CD4-positive, alpha-beta memory T cell (primary cell): ENCODE measurements at regions of chr5 and their contacts with region 1.

Region 1: DNA sequence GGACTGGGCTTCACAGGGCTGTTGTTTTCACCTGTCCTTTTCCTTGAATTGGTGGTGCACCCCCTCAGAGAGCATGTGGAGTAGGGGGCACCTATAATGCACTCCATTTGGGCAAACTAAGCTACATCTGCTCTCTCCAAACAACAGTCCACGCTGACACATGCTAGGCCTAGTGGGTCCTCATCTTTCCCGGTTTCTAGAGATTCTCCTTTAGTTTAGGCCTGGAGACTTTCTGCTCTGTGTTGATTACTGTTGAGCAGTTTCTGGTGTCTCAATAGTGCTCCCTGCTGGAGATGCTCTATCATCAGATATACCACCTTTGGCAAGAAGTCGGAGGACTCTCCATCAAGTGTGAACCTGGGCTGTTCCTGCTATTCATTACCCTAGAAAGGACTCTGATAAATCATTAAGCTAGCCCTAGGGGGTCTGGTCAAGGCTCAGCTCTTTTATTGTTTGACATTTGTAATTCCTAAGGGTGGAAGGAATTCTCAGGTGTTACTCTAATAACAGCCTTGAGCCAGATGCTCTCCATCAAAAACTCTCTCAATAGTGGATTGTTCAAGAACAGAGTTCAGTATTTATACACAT is 64.0 kb upstream of the FYB1 start:
- DNase-seq: peak; percentile 77 to 81 (median 79)
- H3K4me3 ChIP-seq: no peak overlapping the region
- H3K4me3 Mint-ChIP-seq: peak overlapping the region in 5 of 8 donors; percentile 7 to 70 (median 10)
- H3K27ac ChIP-seq: no peak overlapping the region
- H3K27ac Mint-ChIP-seq: peak overlapping the region; percentile 16 to 96 (median 58)
- H3K4me1 ChIP-seq: peaks cover 13% of the 10 kb centered on the region
- H3K4me1 Mint-ChIP-seq: peaks cover 11 to 43% (median 28%) of the 10 kb centered on the region in 4 donors
- H3K27me3 ChIP-seq: no peaks in the 10 kb centered on the region
- H3K27me3 Mint-ChIP-seq: peaks cover 5 to 7% of the 10 kb centered on the region in 2 donors

Region 2: GRCh38 chr5:39074016-39074886 is 209.1 kb before region 1 on chr5 and contains the start of gene RICTOR:
- CTCF ChIA-PET with region 1: interaction called, 4 read pairs
- POLR2A ChIA-PET with region 1: no interaction called
- intact Hi-C with region 1: loop called (anchors 5 kb)
- DNase-seq: peak; percentile 87 to 90 (median 89)
- H3K4me3 ChIP-seq: peak within 1 kb of the TSS; percentile 50 to 56
- H3K4me3 Mint-ChIP-seq: peak within 1 kb of the TSS; percentile 97 to 99 (median 98)
- H3K27ac ChIP-seq: peak within 1 kb of the TSS; percentile 97
- H3K27ac Mint-ChIP-seq: peak within 1 kb of the TSS; percentile 96 to 99 (median 98)
- H3K4me1 ChIP-seq: peaks cover 46% of the 10 kb centered on the region
- H3K4me1 Mint-ChIP-seq: peaks cover 25 to 59% (median 39%) of the 10 kb centered on the region in 4 donors
- H3K27me3 ChIP-seq: peaks cover 22% of the 10 kb centered on the region
- H3K27me3 Mint-ChIP-seq: peaks cover 14 to 18% of the 10 kb centered on the region in 2 donors
- total RNA-seq, gene RICTOR: 85.0 to 94.9 TPM

Region 3: GRCh38 chr5:39158127-39158593 is 125.2 kb before region 1 on chr5:
- CTCF ChIA-PET with region 1: interaction called, 32 read pairs
- POLR2A ChIA-PET with region 1: interaction called, 3 read pairs
- intact Hi-C with region 1: no loop called
- DNase-seq: peak in 1 of 5 donors; percentile 58
- H3K4me3 ChIP-seq: peak overlapping the region in 1 of 2 donors; percentile 7
- H3K4me3 Mint-ChIP-seq: peak overlapping the region in 7 of 8 donors; percentile 55 to 83 (median 71)
- H3K27ac ChIP-seq: peak overlapping the region; percentile 30
- H3K27ac Mint-ChIP-seq: peak overlapping the region; percentile 78 to 94 (median 89)
- H3K4me1 ChIP-seq: peaks cover 100% of the 10 kb centered on the region
- H3K4me1 Mint-ChIP-seq: peaks cover 63 to 88% (median 74%) of the 10 kb centered on the region in 4 donors
- H3K27me3 ChIP-seq: no peaks in the 10 kb centered on the region
- H3K27me3 Mint-ChIP-seq: no peaks in the 10 kb centered on the region

Region 4: GRCh38 chr5:39177631-39177964 is 105.7 kb before region 1 on chr5:
- CTCF ChIA-PET with region 1: interaction called, 25 read pairs
- POLR2A ChIA-PET with region 1: interaction called, 8 read pairs
- intact Hi-C with region 1: loop called (anchors 1 kb)
- DNase-seq: peak; percentile 67 to 78 (median 71)
- H3K4me3 ChIP-seq: peak overlapping the region; percentile 18 to 25
- H3K4me3 Mint-ChIP-seq: peak overlapping the region; percentile 66 to 81 (median 75)
- H3K27ac ChIP-seq: peak overlapping the region; percentile 56
- H3K27ac Mint-ChIP-seq: peak overlapping the region; percentile 91 to 97 (median 92)
- H3K4me1 ChIP-seq: peaks cover 100% of the 10 kb centered on the region
- H3K4me1 Mint-ChIP-seq: peaks cover 87 to 98% (median 93%) of the 10 kb centered on the region in 4 donors
- H3K27me3 ChIP-seq: no peaks in the 10 kb centered on the region
- H3K27me3 Mint-ChIP-seq: no peaks in the 10 kb centered on the region

Region 5: GRCh38 chr5:39209924-39210323 is 73.4 kb before region 1 on chr5:
- CTCF ChIA-PET with region 1: interaction called, 39 read pairs
- POLR2A ChIA-PET with region 1: interaction called, 10 read pairs
- intact Hi-C with region 1: no loop called
- DNase-seq: peak; percentile 87 to 93 (median 88)
- H3K4me3 ChIP-seq: peak overlapping the region; percentile 45 to 48
- H3K4me3 Mint-ChIP-seq: peak overlapping the region; percentile 76 to 85 (median 84)
- H3K27ac ChIP-seq: peak overlapping the region; percentile 84
- H3K27ac Mint-ChIP-seq: peak overlapping the region; percentile 91 to 98 (median 95)
- H3K4me1 ChIP-seq: peaks cover 98% of the 10 kb centered on the region
- H3K4me1 Mint-ChIP-seq: peaks cover 68 to 100% (median 88%) of the 10 kb centered on the region in 4 donors
- H3K27me3 ChIP-seq: no peaks in the 10 kb centered on the region
- H3K27me3 Mint-ChIP-seq: no peaks in the 10 kb centered on the region

Region 6: DNA sequence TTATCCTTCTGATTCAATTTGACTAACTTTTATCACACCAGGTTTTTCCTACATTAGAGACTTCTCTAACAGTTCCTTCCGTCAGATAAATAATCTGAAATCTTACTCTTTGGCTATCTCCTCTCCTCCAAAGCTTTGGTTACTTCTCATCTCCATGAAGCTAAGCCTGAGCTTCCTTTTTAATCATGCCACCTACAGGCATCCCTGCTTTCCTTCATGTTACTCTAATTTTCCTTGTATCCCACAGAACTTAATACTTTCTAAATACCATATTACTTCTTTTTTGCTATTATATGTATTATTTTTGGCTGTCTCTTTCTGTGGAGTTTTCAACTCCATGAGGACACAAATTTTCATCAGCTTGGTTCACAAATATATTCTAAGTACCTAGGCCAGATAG is 31.3 kb after region 1 on chr5:
- CTCF ChIA-PET with region 1: no interaction called
- POLR2A ChIA-PET with region 1: no interaction called
- intact Hi-C with region 1: no loop called
- DNase-seq: no peak
- H3K4me3 ChIP-seq: no peak overlapping the region
- H3K4me3 Mint-ChIP-seq: no peak overlapping the region
- H3K27ac ChIP-seq: no peak overlapping the region
- H3K27ac Mint-ChIP-seq: no peak overlapping the region
- H3K4me1 ChIP-seq: no peaks in the 10 kb centered on the region
- H3K4me1 Mint-ChIP-seq: peaks cover 0 to 3% (median 0%) of the 10 kb centered on the region in 4 donors
- H3K27me3 ChIP-seq: peaks cover 8% of the 10 kb centered on the region
- H3K27me3 Mint-ChIP-seq: peaks cover 6 to 12% of the 10 kb centered on the region in 2 donors

Region 7: GRCh38 chr5:39547553-39548154 is 264.3 kb after region 1 on chr5:
- CTCF ChIA-PET with region 1: interaction called, 4 read pairs
- POLR2A ChIA-PET with region 1: no interaction called
- intact Hi-C with region 1: loop called (anchors 1 kb)
- DNase-seq: peak in 4 of 5 donors; percentile 32 to 39 (median 34)
- H3K4me3 ChIP-seq: no peak overlapping the region
- H3K4me3 Mint-ChIP-seq: peak overlapping the region in 7 of 8 donors; percentile 4 to 64 (median 29)
- H3K27ac ChIP-seq: no peak overlapping the region
- H3K27ac Mint-ChIP-seq: no peak overlapping the region
- H3K4me1 ChIP-seq: peaks cover 7% of the 10 kb centered on the region
- H3K4me1 Mint-ChIP-seq: peaks cover 3 to 5% (median 5%) of the 10 kb centered on the region in 4 donors
- H3K27me3 ChIP-seq: no peaks in the 10 kb centered on the region
- H3K27me3 Mint-ChIP-seq: peaks cover 0 to 1% of the 10 kb centered on the region in 2 donors